AG04450 (cell line): ENCODE measurements at regions of chr20 and their contacts with region 1.

Region 1: GRCh38 chr20:54657268-54657827 is 182.0 kb downstream of the DOK5 start:
- DNase-seq: no peak
- H3K4me3 ChIP-seq: no peak overlapping the region
- H3K27ac ChIP-seq: no peak overlapping the region
- H3K27me3 ChIP-seq: no peaks in the 10 kb centered on the region
- CTCF ChIP-seq: no peak

Region 2: GRCh38 chr20:54668271-54669039 is 11.1 kb after region 1 on chr20:
- CTCF ChIA-PET with region 1: interaction called, 12 read pairs
- POLR2A ChIA-PET with region 1: no interaction called
- DNase-seq: no peak
- H3K4me3 ChIP-seq: no peak overlapping the region
- H3K27ac ChIP-seq: no peak overlapping the region
- H3K27me3 ChIP-seq: no peaks in the 10 kb centered on the region
- CTCF ChIP-seq: peak; percentile 71

Region 3: DNA sequence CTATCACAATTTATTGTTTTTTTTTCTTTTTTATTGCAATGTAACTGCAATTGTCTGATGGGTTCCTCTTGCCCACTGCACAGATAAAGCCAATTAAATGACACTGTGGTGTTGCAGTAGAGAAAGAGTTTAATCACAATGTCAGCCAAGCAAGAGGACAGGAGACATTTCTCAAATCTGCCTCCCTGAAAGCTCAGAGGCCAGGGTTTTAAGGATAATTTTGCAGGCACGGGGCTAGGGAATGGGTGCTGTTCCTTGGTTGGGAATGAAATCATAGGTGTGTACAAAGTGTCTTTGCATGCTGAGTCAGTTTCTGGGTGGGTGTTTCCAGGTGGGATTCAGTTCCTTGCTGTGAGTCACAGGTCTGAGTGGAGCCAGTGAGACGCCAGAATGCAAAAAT is 89.4 kb after region 1 on chr20:
- CTCF ChIA-PET with region 1: no interaction called
- POLR2A ChIA-PET with region 1: no interaction called
- DNase-seq: no peak
- H3K4me3 ChIP-seq: no peak overlapping the region
- H3K27ac ChIP-seq: no peak overlapping the region
- H3K27me3 ChIP-seq: no peaks in the 10 kb centered on the region
- CTCF ChIP-seq: no peak